Pancreas (tissue), 10 donors: ENCODE measurements at regions of chr6 and their contacts with region 1.

Region 1: GRCh38 chr6:28136585-28137504 is 4.8 kb upstream of the ZKSCAN8 start:
- DNase-seq: peak; percentile 79 to 92 (median 87)
- ATAC-seq: peak; percentile 87 to 94 (median 90)
- H3K4me3 ChIP-seq: peak overlapping the region; percentile 53 to 76 (median 67)
- H3K27ac ChIP-seq: peak overlapping the region; percentile 47 to 83 (median 70)
- H3K4me1 ChIP-seq: peaks cover 0 to 9% (median 4%) of the 10 kb centered on the region in 3 donors
- H3K27me3 ChIP-seq: no peaks in the 10 kb centered on the region
- CTCF ChIP-seq: no peak

Region 2: GRCh38 chr6:28368522-28368921 is 231.7 kb after region 1 on chr6:
- intact Hi-C with region 1: loop called in 1 of 3 experiments (anchors 10 kb)
- DNase-seq: no peak
- ATAC-seq: no peak
- H3K4me3 ChIP-seq: no peak overlapping the region
- H3K27ac ChIP-seq: no peak overlapping the region
- H3K4me1 ChIP-seq: no peaks in the 10 kb centered on the region
- H3K27me3 ChIP-seq: no peaks in the 10 kb centered on the region
- CTCF ChIP-seq: no peak